CD8-positive, alpha-beta memory T cell (primary cell): ENCODE measurements at regions of chr1 and their contacts with region 1.

Region 1: GRCh38 chr1:205840146-205840923 is 9.6 kb downstream of the PM20D1 start:
- DNase-seq: no peak
- H3K4me3 ChIP-seq: no peak overlapping the region
- H3K4me3 Mint-ChIP-seq: no peak overlapping the region
- H3K27ac ChIP-seq: no peak overlapping the region
- H3K27ac Mint-ChIP-seq: peak overlapping the region in 1 of 8 donors; percentile 28
- H3K4me1 ChIP-seq: no peaks in the 10 kb centered on the region
- H3K4me1 Mint-ChIP-seq: no peaks in the 10 kb centered on the region
- H3K27me3 ChIP-seq: no peaks in the 10 kb centered on the region
- H3K27me3 Mint-ChIP-seq: peaks cover 0 to 1% of the 10 kb centered on the region in 2 donors

Region 2: DNA sequence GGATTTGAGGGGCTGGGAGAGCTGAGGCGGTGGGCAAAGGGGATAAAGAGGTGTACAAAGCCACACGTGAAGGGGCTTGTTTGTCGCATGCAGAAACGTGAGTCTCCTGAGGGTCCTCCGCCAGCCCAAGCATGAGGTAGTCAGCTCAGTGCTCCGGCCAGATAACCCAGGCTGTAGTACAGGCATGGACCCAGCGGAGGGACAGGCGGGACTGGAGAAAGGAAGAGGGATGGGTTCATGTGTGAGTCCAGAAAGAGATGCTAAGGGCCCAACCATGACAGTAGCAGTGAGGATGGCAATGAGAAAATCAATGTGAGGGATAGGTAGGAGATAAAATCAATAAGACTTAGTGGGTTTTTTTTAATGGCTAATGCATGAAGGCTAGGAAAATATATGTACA is 194.8 kb before region 1 on chr1:
- CTCF ChIA-PET with region 1: no interaction called
- POLR2A ChIA-PET with region 1: no interaction called
- DNase-seq: no peak
- H3K4me3 ChIP-seq: no peak overlapping the region
- H3K4me3 Mint-ChIP-seq: no peak overlapping the region
- H3K27ac ChIP-seq: no peak overlapping the region
- H3K27ac Mint-ChIP-seq: no peak overlapping the region
- H3K4me1 ChIP-seq: no peaks in the 10 kb centered on the region
- H3K4me1 Mint-ChIP-seq: no peaks in the 10 kb centered on the region
- H3K27me3 ChIP-seq: no peaks in the 10 kb centered on the region
- H3K27me3 Mint-ChIP-seq: peaks cover 9 to 21% of the 10 kb centered on the region in 2 donors

Region 3: GRCh38 chr1:206833781-206834180 is 993.4 kb after region 1 on chr1:
- CTCF ChIA-PET with region 1: no interaction called
- POLR2A ChIA-PET with region 1: interaction called, 12 read pairs
- DNase-seq: no peak
- H3K4me3 ChIP-seq: no peak overlapping the region
- H3K4me3 Mint-ChIP-seq: no peak overlapping the region
- H3K27ac ChIP-seq: no peak overlapping the region
- H3K27ac Mint-ChIP-seq: no peak overlapping the region
- H3K4me1 ChIP-seq: peaks cover 22% of the 10 kb centered on the region
- H3K4me1 Mint-ChIP-seq: peaks cover 38 to 46% (median 42%) of the 10 kb centered on the region in 3 donors
- H3K27me3 ChIP-seq: no peaks in the 10 kb centered on the region
- H3K27me3 Mint-ChIP-seq: peaks cover 0 to 1% of the 10 kb centered on the region in 2 donors